ENCODE measurements at regions of chr12 and their contacts with region 1.

Region 1: DNA sequence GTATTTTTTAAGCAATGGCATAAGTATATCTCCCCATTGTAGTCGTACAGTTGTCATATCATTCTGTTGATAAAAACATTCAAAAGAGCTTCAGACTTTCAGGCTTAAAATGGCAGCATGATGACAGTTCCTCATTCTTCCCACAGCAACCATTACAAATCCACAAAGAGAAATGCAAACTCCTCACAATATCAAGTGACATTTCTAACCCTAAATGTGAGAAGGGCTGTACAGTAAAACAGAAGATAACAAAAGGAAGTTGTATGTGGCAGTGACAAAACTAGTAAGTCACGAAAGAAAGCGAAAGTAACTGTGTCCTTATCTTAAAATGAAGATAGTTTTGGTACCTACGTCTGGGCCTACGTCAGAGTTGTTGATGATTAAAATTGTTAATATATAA is 46.7 kb downstream of the GXYLT1 start:
- DNase-seq: no peak
- H3K4me3 Mint-ChIP-seq: peak overlapping the region; percentile 86
- H3K27ac Mint-ChIP-seq: peak overlapping the region; percentile 85
- H3K4me1 Mint-ChIP-seq: peaks cover 39% of the 10 kb centered on the region
- H3K27me3 Mint-ChIP-seq: no peaks in the 10 kb centered on the region

Region 2: GRCh38 chr12:42086031-42086430 is 11.9 kb before region 1 on chr12:
- intact Hi-C with region 1: loop called (anchors 2 kb)
- DNase-seq: no peak
- H3K4me3 Mint-ChIP-seq: no peak overlapping the region
- H3K27ac Mint-ChIP-seq: no peak overlapping the region
- H3K4me1 Mint-ChIP-seq: no peaks in the 10 kb centered on the region
- H3K27me3 Mint-ChIP-seq: no peaks in the 10 kb centered on the region

Region 3: DNA sequence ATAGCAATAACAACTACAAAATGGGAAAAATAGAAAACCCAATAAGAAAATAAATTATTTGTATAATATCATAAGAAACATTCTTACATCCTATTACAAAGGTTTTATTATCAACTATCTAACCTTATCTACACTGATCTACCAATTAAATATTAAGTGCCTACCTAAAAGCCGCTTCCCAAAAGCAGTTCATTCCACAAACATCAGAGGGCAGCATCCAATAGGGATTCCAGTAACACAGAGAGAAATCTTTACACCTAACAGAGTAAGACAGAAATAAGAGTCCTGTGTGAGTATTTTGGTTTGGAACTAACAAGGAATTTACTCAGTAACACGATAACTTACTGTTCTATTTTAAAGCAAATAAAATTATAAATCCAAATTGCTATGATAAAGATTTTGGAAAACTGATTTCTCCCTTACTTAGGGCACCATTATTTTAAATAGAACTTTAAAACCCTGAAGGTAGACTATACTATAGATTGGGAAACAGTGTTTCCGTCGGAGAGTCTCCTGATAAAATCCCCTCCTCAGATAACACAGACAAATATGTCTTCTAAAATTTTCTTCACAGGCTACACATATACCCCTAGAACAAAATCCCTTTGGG is 31.7 kb after region 1 on chr12:
- intact Hi-C with region 1: no loop called
- DNase-seq: no peak
- H3K4me3 Mint-ChIP-seq: no peak overlapping the region
- H3K27ac Mint-ChIP-seq: no peak overlapping the region
- H3K4me1 Mint-ChIP-seq: peaks cover 14% of the 10 kb centered on the region
- H3K27me3 Mint-ChIP-seq: no peaks in the 10 kb centered on the region

Region 4: DNA sequence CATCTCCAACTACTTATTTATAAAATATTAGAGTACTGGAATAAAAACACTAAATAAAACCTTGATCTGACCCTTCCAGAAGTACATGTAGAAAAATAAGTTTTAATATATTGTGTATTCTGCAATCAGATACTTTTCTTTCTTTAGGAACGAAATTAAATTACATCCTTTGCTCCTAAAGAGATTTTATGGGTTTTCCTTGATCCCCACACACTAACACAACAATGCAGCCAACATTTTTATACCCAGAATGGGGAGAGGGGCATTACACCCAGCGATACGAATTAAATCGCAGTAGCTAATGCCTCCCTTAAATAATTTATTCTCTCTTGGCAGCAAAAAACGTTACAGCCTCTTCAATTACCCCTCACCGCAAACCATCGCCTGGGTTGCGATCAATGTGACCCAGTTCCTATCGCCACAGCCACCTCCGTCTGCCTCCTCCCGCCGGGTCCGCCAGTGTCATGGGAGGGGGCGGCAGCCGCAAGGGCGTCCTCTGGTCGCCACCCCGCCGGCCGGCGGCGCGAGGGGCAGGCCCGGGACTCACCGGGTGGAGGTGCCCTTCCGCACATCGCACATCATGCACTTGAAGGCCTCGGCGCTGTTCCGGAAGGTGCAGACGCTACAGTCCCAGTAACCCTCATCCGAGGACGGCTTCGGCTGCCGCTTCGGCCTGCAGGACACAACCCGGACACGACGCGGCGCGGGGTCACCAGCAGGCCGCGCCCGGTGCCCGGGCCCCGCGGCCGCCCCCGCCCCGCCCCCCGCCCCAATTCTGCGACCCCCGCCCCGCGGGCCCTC is 139.3 kb after region 1 on chr12:
- intact Hi-C with region 1: loop called (anchors 2 kb)
- DNase-seq: peak; percentile 68
- H3K4me3 Mint-ChIP-seq: peak overlapping the region; percentile 87
- H3K27ac Mint-ChIP-seq: peak overlapping the region; percentile 83
- H3K4me1 Mint-ChIP-seq: peaks cover 46% of the 10 kb centered on the region
- H3K27me3 Mint-ChIP-seq: no peaks in the 10 kb centered on the region

Region 5: GRCh38 chr12:42332301-42333285 is 234.6 kb after region 1 on chr12:
- intact Hi-C with region 1: loop called (anchors 1 kb)
- DNase-seq: no peak
- H3K4me3 Mint-ChIP-seq: no peak overlapping the region
- H3K27ac Mint-ChIP-seq: no peak overlapping the region
- H3K4me1 Mint-ChIP-seq: peaks cover 47% of the 10 kb centered on the region
- H3K27me3 Mint-ChIP-seq: no peaks in the 10 kb centered on the region